IMR-90 (cell line): ENCODE measurements at regions of chr1 and their contacts with region 1.

Region 1: GRCh38 chr1:66231217-66231616 is 302.7 kb upstream of the SGIP1 start:
- DNase-seq: peak; percentile 52
- ATAC-seq: peak; percentile 32; the same call in 1 of the 2 replicates
- H3K4me3 ChIP-seq: no peak overlapping the region
- H3K27ac ChIP-seq: no peak overlapping the region
- H3K4me1 ChIP-seq: no peaks in the 10 kb centered on the region
- H3K27me3 ChIP-seq: no peaks in the 10 kb centered on the region
- CTCF ChIP-seq: no peak
- POLR2A ChIP-seq: no peak
- RAD21 ChIP-seq: no peak

Region 2: GRCh38 chr1:66160719-66161118 is 70.5 kb before region 1 on chr1:
- CTCF ChIA-PET with region 1: no interaction called
- POLR2A ChIA-PET with region 1: no interaction called
- dilution Hi-C with region 1: no loop called
- in situ Hi-C with region 1: no loop called
- intact Hi-C with region 1: loop called (anchors 2 kb)
- DNase-seq: no peak
- ATAC-seq: no peak
- H3K4me3 ChIP-seq: no peak overlapping the region
- H3K27ac ChIP-seq: no peak overlapping the region
- H3K4me1 ChIP-seq: no peaks in the 10 kb centered on the region
- H3K27me3 ChIP-seq: no peaks in the 10 kb centered on the region
- CTCF ChIP-seq: no peak
- POLR2A ChIP-seq: no peak
- RAD21 ChIP-seq: no peak